ENCODE measurements at regions of chr1 and their contacts with region 1.

Region 1: DNA sequence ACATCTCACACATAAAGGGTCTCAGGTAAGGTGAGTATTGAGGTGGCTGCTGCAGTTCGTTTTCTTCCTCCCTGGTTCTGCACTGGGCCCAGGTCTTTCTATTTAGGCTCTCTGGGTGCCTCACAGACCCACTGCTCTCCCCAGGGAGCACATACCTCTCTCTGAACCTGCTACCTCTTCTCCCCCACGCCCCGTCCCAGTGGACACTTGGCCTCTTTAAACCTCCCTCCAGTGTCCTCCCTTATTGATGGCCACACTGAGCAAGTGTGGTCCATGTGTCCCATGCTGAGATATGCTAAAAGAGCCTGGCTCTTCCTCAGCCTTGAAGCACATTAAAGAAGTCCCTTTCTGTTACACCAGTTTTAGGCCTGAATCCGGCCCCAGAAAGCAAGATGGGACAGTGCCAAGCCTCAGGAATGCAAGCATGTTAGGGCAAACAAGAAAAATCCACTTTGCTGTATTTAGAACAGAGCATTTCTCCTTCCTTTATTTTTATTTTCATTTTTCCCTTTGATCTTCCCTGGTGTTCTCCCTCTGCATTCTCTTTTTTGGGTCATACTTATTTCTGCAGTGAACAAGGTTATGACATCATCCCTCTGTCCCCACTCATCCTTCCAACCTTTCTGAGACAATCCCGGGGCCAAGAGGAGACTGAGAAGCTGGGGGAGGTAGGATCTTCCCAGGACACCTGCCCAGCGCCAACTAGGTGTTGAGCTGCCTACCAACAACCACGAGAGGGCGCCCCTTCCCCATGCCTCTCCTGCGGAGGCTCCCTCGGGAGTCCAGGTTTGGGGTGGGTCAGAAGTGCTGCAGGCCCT is 5.0 kb upstream of the CHI3L2 start:
- DNase-seq: peak; percentile 72

Region 2: GRCh38 chr1:111399792-111400610 is 177.5 kb after region 1 on chr1:
- in situ Hi-C with region 1: loop called (anchors 10 kb)
- DNase-seq: peak; percentile 58

Region 3: DNA sequence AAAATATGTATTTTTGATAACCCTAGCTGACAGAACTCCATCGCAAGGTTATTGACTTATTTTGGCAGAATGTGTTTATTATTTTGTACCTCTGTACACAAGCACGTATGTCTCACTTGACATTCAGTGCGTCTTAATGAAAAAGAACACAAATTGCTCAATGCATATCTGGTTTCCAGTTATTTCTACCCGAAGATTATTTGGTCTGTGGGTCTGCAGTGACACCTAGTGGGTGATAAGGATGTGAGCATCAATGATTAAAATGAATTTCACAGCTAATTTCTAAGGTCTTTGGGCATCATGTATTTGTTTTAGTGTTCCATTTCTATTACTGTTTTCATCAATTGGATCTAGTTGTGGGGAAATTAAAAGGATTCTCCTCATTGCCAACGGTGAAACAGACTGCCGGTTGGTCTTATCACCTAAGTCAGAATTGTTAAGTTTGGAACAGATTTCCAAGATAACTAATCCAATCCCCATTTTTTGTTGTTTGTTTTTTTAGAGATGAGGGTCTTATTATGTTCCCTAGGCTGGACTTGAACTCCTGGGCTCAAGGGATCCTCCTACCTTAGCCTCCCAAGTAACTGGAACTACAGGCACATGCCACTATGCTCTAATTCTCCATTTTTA is 547.1 kb after region 1 on chr1:
- in situ Hi-C with region 1: loop called (anchors 10 kb)
- DNase-seq: peak; percentile 50

Measured in KBM-7 (cell line).